Activated CD4-positive, alpha-beta memory T cell treated with anti-CD3 and anti-CD28 coated beads for 36 hours (primary cell): ENCODE measurements at regions of chr11 and their contacts with region 1.

Region 1: GRCh38 chr11:19553683-19554333 is 158.8 kb upstream of the NAV2 start:
- DNase-seq: peak; percentile 82
- H3K4me3 Mint-ChIP-seq: no peak overlapping the region
- H3K27ac Mint-ChIP-seq: no peak overlapping the region
- H3K4me1 Mint-ChIP-seq: no peaks in the 10 kb centered on the region
- H3K27me3 Mint-ChIP-seq: peaks cover 6% of the 10 kb centered on the region

Region 2: DNA sequence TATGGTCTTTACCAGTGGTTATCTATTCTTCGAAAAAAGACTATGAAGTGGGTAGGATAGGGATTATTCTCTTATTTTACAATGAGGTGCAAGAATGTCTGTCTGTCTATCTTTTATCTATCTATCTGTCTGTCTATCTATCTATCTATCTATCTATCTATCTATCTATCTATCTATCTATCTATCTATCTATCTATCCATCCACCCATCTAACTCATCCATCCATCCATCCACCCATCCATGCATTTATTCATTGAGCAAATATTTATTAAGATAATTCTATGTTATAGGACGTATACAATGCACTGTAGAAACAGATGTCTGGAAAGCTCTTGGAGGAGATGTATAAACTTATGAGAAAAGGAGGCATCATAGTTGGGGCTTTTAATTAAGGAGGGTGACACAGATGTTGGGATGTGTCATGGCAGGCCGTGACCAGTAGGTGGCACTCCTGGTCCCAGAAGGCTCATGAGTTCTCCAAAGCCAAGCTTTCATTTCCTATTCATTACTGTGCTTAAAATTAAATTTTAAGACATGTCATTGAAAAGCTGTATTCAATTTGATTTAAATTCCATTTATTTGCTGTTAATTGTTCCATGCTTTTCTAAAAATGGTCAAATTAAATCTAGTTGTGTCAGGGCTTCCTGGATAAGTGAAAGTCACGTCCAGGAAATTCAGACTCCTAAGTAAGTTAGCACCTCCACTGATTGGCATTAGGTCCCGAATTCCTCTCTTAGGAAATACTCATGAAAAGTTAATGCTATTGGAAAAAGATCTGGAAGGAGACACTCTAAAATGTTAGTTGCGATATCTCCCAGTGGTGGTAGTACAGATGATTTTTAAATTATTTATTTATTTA is 294.1 kb before region 1 on chr11:
- CTCF ChIA-PET with region 1: interaction called, 27 read pairs
- POLR2A ChIA-PET with region 1: no interaction called
- intact Hi-C with region 1: loop called (anchors 1 kb)
- DNase-seq: peak; percentile 76
- H3K4me3 Mint-ChIP-seq: no peak overlapping the region
- H3K27ac Mint-ChIP-seq: no peak overlapping the region
- H3K4me1 Mint-ChIP-seq: no peaks in the 10 kb centered on the region
- H3K27me3 Mint-ChIP-seq: no peaks in the 10 kb centered on the region

Region 3: DNA sequence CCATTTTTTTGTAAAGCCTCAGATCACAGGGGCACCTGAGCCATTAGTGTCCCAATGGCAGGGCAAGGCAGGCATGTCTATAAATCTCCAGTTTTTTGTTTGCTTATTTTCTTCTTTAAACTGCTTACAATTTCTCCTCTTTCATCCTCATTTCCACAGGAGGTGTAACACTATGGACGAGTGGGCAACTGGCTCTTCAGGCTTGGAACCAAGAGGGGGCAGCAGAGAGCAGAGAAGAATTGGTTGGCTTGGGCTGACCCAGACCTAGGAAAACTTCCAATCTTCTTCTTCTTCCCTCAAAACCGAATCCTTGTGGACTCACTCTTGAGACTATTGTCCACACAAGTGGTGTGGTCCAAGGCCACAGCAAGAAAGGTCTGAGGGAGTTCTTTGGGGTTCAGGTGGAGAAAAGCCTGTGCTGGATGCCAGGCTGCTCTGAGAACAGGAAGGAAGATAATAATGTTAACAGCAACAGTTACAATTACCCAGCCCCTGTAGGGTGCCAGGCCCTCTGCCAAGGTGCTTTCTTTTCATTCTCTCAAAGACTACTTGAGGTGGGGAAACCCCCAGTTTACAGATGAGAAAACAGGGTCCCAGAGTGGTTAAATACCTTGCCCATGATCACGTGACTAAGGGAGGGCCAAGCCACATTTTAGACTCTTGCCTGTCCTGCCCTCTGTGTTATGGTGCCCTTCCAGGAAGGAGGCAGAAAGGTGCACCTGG is 242.3 kb before region 1 on chr11:
- CTCF ChIA-PET with region 1: interaction called, 3 read pairs
- POLR2A ChIA-PET with region 1: no interaction called
- intact Hi-C with region 1: loop called (anchors 1 kb)
- DNase-seq: peak; percentile 60
- H3K4me3 Mint-ChIP-seq: no peak overlapping the region
- H3K27ac Mint-ChIP-seq: no peak overlapping the region
- H3K4me1 Mint-ChIP-seq: no peaks in the 10 kb centered on the region
- H3K27me3 Mint-ChIP-seq: no peaks in the 10 kb centered on the region

Region 4: GRCh38 chr11:19777377-19778102 is 223.7 kb after region 1 on chr11:
- CTCF ChIA-PET with region 1: no interaction called
- POLR2A ChIA-PET with region 1: no interaction called
- intact Hi-C with region 1: no loop called
- DNase-seq: peak; percentile 31
- H3K4me3 Mint-ChIP-seq: peak overlapping the region; percentile 63
- H3K27ac Mint-ChIP-seq: no peak overlapping the region
- H3K4me1 Mint-ChIP-seq: peaks cover 15% of the 10 kb centered on the region
- H3K27me3 Mint-ChIP-seq: peaks cover 44% of the 10 kb centered on the region

Region 5: GRCh38 chr11:19903620-19904069 is 349.8 kb after region 1 on chr11:
- CTCF ChIA-PET with region 1: interaction called, 27 read pairs
- POLR2A ChIA-PET with region 1: no interaction called
- intact Hi-C with region 1: loop called (anchors 1 kb)
- DNase-seq: peak; percentile 69
- H3K4me3 Mint-ChIP-seq: no peak overlapping the region
- H3K27ac Mint-ChIP-seq: no peak overlapping the region
- H3K4me1 Mint-ChIP-seq: no peaks in the 10 kb centered on the region
- H3K27me3 Mint-ChIP-seq: no peaks in the 10 kb centered on the region